Activated CD8-positive, alpha-beta T cell treated with anti-CD3 and anti-CD28 coated beads, Interleukin-2, amount 10 ng/mL, durations not matched to agents 7 days and 5 days (primary cell): ENCODE measurements at regions of chr12 and their contacts with region 1.

Region 1: GRCh38 chr12:50763639-50764285 is at the start of gene ATF1:
- DNase-seq: peak; percentile 92
- ATAC-seq: peak; percentile 81
- H3K4me3 Mint-ChIP-seq: peak within 1 kb of the TSS; percentile 81
- H3K27ac Mint-ChIP-seq: peak within 1 kb of the TSS; percentile 89
- H3K4me1 Mint-ChIP-seq: peaks cover 30% of the 10 kb centered on the region
- H3K27me3 Mint-ChIP-seq: no peaks in the 10 kb centered on the region
- total RNA-seq, gene ATF1: 35.4 to 36.7 TPM

Region 2: DNA sequence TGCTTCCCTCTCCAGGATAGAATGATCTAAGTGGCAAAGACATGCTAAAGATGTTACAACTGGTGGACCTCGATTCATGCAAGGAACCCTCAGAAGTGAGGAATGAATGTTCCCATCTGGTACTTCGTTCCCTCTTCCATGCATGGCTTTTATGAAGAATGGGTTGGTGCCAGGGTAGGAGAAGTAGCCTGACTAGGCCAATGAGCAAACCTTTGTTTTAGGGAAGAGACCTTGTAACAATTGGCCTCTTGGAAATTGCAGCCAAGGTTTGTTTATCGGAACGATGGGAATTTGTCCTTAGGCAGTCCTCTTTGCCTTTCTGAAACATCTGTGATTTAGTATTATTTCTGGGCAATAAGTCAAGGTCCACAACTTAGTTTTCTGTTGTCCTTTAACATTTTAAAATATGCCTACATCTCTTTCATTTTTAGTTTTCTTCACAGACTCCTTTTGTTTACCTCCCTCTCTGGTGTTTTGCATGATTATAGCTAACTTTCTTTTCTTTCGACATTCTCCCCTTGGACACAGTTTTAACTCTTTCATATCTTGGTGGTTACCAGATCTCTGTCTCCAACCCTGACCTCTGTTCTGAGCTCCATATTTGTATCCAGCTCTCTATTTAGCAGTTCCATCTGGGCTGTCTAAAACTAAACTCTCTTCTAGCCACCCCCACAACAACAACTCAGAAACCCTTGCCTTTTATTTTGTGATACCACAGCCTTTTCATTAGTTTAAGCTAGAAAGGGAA is 189.0 kb before region 1 on chr12:
- CTCF ChIA-PET with region 1: no interaction called
- POLR2A ChIA-PET with region 1: no interaction called
- DNase-seq: no peak
- ATAC-seq: no peak
- H3K4me3 Mint-ChIP-seq: no peak overlapping the region
- H3K27ac Mint-ChIP-seq: peak overlapping the region; percentile 12
- H3K4me1 Mint-ChIP-seq: no peaks in the 10 kb centered on the region
- H3K27me3 Mint-ChIP-seq: no peaks in the 10 kb centered on the region

Region 3: DNA sequence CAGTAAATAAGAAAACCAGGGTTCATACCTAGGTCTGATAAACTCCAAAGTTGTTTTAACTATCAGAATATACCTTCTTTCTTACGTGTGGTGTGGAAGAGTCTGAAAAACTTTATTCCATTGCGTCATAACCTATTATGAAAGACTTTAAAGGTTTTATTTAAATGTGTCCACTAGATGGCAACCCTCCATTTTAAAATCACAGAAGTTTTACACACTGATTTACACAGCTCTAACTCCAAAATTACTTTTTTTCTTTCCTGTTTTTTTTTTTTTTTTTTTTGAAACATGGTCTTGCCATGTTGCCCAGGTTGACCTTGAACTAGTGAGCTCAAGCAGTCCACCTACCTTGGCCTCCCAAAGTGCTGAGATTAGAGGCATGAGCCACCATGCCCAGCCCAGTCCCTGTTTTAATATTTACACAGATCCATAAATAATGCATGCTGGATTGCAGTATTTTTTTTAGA is 61.6 kb after region 1 on chr12:
- CTCF ChIA-PET with region 1: interaction called, 25 read pairs
- POLR2A ChIA-PET with region 1: interaction called, 8 read pairs
- DNase-seq: no peak
- ATAC-seq: peak; percentile 73
- H3K4me3 Mint-ChIP-seq: no peak overlapping the region
- H3K27ac Mint-ChIP-seq: peak overlapping the region; percentile 46
- H3K4me1 Mint-ChIP-seq: peaks cover 5% of the 10 kb centered on the region
- H3K27me3 Mint-ChIP-seq: no peaks in the 10 kb centered on the region

Region 4: GRCh38 chr12:51009056-51009440 is 245.3 kb after region 1 on chr12:
- CTCF ChIA-PET with region 1: interaction called, 11 read pairs
- POLR2A ChIA-PET with region 1: interaction called, 3 read pairs
- DNase-seq: peak; percentile 73
- ATAC-seq: peak; percentile 98
- H3K4me3 Mint-ChIP-seq: peak overlapping the region; percentile 52
- H3K27ac Mint-ChIP-seq: peak overlapping the region; percentile 75
- H3K4me1 Mint-ChIP-seq: peaks cover 19% of the 10 kb centered on the region
- H3K27me3 Mint-ChIP-seq: no peaks in the 10 kb centered on the region

Region 5: DNA sequence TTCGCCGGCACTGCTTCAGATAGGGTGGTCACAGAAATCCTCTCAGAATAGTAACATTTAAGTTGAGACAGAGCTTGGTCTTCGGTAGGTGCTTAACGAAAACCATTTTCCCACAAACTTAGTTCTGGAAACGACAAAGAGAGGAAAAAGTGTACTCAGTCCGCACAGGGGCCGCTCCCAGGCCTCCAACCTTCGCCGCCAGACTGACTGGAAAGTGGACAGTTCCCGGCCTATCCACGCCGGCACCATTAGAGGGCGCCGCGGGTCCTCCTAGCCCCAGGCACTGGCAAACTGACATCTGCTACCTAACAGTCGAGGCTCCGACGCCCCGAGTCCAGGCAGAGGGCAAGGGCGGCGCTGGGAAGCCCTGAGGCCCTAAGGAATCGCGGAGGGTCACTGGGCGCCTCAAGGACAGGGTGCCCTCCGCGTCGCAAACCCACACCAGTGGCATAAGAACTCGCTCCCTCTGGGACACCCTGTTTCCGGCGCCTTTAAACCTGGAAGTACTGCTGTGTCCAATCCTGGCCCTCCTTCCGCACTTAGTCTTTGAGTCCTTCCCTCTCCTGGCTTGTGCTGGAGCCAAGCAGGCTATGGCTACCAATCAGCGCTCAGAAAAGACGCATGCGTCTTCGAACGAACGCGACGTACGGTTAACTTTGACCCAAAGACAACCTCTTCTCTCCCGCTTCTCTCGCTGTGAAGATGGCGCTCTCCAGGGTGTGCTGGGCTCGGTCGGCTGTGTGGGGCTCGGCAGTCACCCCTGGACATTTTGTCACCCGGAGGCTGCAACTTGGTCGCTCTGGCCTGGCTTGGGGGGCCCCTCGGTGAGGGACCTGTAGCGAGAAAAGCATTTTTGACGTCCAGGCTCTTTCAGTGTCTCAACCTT is 284.1 kb after region 1 on chr12 and contains the start of gene LETMD1:
- CTCF ChIA-PET with region 1: interaction called, 4 read pairs
- POLR2A ChIA-PET with region 1: interaction called, 18 read pairs
- DNase-seq: peak; percentile 96
- ATAC-seq: peak; percentile 99
- H3K4me3 Mint-ChIP-seq: peak within 1 kb of the TSS; percentile 88
- H3K27ac Mint-ChIP-seq: peak within 1 kb of the TSS; percentile 87
- H3K4me1 Mint-ChIP-seq: peaks cover 31% of the 10 kb centered on the region
- H3K27me3 Mint-ChIP-seq: no peaks in the 10 kb centered on the region
- total RNA-seq, gene LETMD1: 60.1 to 69.7 TPM